ENCODE measurements at regions of chrX and their contacts with region 1.

Region 1: GRCh38 chrX:109856974-109857373 is 123.9 kb upstream of the ACSL4 start:
- DNase-seq: peak; percentile 57
- ATAC-seq: no peak
- H3K4me3 ChIP-seq: no peak overlapping the region
- H3K27ac ChIP-seq: no peak overlapping the region
- H3K4me1 ChIP-seq: peaks cover 12% of the 10 kb centered on the region; the same call in 1 of the 2 replicates
- H3K27me3 ChIP-seq: no peaks in the 10 kb centered on the region
- CTCF ChIP-seq: peak; percentile 86

Region 2: DNA sequence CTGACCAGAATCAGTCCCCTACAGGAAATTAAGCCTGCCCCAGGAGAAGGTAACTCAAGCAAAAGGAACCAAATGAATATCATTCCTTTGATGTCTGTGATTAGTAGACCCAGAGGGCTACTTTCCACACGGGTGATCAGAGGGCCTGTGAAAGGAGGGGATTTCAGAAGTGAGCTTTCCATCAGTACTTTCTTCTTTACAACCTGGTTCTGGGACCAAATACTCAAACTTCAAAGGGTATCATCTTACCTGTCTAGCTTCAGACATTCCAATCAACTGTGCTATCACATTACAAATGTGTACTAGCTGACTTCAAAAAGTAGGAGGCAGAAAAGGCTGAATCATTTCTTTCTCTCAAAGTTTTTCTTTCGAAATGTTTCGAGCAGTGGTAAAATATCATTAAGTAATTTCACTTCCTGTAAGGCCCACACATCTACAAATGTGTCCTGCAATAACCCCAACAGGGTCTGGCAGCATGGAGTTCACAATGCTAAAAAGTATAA is 147.8 kb before region 1 on chrX:
- CTCF ChIA-PET with region 1: interaction called, 45 read pairs
- POLR2A ChIA-PET with region 1: interaction called, 6 read pairs
- intact Hi-C with region 1: loop called (anchors 1 kb)
- DNase-seq: peak; percentile 66
- ATAC-seq: peak; percentile 48
- H3K4me3 ChIP-seq: peak overlapping the region; percentile 27; the same call in 1 of the 2 replicates
- H3K27ac ChIP-seq: peak overlapping the region; percentile 9; the same call in 1 of the 2 replicates
- H3K4me1 ChIP-seq: peaks cover 19% of the 10 kb centered on the region
- H3K27me3 ChIP-seq: no peaks in the 10 kb centered on the region
- CTCF ChIP-seq: no peak; the same call in 1 of the 2 replicates

Region 3: GRCh38 chrX:109714340-109714958 is 142.5 kb before region 1 on chrX:
- CTCF ChIA-PET with region 1: interaction called, 45 read pairs
- POLR2A ChIA-PET with region 1: interaction called, 6 read pairs
- intact Hi-C with region 1: loop called (anchors 1 kb)
- DNase-seq: peak; percentile 84
- ATAC-seq: peak; percentile 95
- H3K4me3 ChIP-seq: peak overlapping the region; percentile 7; the same call in 1 of the 2 replicates
- H3K27ac ChIP-seq: peak overlapping the region; percentile 50
- H3K4me1 ChIP-seq: peaks cover 22% of the 10 kb centered on the region
- H3K27me3 ChIP-seq: no peaks in the 10 kb centered on the region
- CTCF ChIP-seq: no peak

Region 4: GRCh38 chrX:109732780-109733657 is 124.0 kb before region 1 on chrX and contains the start of gene ACSL4:
- CTCF ChIA-PET with region 1: interaction called, 7 read pairs
- POLR2A ChIA-PET with region 1: interaction called, 3 read pairs
- intact Hi-C with region 1: loop called (anchors 5 kb)
- DNase-seq: peak; percentile 89
- ATAC-seq: peak; percentile 93
- H3K4me3 ChIP-seq: peak within 1 kb of the TSS; percentile 77
- H3K27ac ChIP-seq: peak within 1 kb of the TSS; percentile 0; the same call in 1 of the 2 replicates
- H3K4me1 ChIP-seq: peaks cover 20% of the 10 kb centered on the region
- H3K27me3 ChIP-seq: no peaks in the 10 kb centered on the region
- CTCF ChIP-seq: no peak
- total RNA-seq, gene ACSL4: 41.7 and 53.1 TPM in 2 replicates